Caco-2 (cell line): ENCODE measurements at regions of chr9 and their contacts with region 1.

Region 1: GRCh38 chr9:77944556-77945243 is 86.9 kb downstream of the GNAQ start:
- DNase-seq: peak; percentile 23 to 42
- H3K4me3 ChIP-seq: no peak overlapping the region
- H3K4me3 Mint-ChIP-seq: no peak overlapping the region
- H3K27ac Mint-ChIP-seq: peak overlapping the region; percentile 48
- H3K4me1 ChIP-seq: 0 out of 2 replicates have a peak, but pooled peaks cover 3% of the 10 kb centered on the region
- H3K4me1 Mint-ChIP-seq: peaks cover 1% of the 10 kb centered on the region
- H3K27me3 ChIP-seq: no peaks in the 10 kb centered on the region
- H3K27me3 Mint-ChIP-seq: no peaks in the 10 kb centered on the region
- CTCF ChIP-seq: peak in 1 of 2 experiments; percentile 12

Region 2: DNA sequence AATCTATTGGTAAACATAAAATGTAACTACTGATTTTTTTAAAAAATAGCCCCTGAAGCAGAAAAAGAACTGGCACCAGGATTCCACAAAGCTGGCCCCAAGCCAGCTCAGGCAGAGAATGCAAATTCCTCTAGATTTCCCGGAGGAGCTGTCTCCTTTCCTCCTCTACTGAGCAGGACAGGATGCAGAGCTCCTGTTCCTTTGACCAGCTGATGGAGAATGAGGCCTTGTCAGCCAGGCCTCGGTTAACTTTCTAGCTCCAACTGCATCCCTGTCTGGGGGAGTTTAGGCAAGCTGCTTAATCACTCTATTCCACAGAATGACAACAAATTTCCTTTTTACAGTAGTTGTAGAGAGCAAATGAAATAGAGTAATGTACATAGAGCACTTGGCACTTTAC is 68.6 kb before region 1 on chr9:
- CTCF ChIA-PET with region 1: no interaction called
- POLR2A ChIA-PET with region 1: no interaction called
- intact Hi-C with region 1: loop called (anchors 10 kb)
- DNase-seq: no peak
- H3K4me3 ChIP-seq: no peak overlapping the region
- H3K4me3 Mint-ChIP-seq: no peak overlapping the region
- H3K27ac Mint-ChIP-seq: no peak overlapping the region
- H3K4me1 ChIP-seq: no peaks in the 10 kb centered on the region
- H3K4me1 Mint-ChIP-seq: no peaks in the 10 kb centered on the region
- H3K27me3 ChIP-seq: no peaks in the 10 kb centered on the region
- H3K27me3 Mint-ChIP-seq: no peaks in the 10 kb centered on the region
- CTCF ChIP-seq: no peak